ENCODE measurements at regions of chr17 and their contacts with region 1.

Region 1: DNA sequence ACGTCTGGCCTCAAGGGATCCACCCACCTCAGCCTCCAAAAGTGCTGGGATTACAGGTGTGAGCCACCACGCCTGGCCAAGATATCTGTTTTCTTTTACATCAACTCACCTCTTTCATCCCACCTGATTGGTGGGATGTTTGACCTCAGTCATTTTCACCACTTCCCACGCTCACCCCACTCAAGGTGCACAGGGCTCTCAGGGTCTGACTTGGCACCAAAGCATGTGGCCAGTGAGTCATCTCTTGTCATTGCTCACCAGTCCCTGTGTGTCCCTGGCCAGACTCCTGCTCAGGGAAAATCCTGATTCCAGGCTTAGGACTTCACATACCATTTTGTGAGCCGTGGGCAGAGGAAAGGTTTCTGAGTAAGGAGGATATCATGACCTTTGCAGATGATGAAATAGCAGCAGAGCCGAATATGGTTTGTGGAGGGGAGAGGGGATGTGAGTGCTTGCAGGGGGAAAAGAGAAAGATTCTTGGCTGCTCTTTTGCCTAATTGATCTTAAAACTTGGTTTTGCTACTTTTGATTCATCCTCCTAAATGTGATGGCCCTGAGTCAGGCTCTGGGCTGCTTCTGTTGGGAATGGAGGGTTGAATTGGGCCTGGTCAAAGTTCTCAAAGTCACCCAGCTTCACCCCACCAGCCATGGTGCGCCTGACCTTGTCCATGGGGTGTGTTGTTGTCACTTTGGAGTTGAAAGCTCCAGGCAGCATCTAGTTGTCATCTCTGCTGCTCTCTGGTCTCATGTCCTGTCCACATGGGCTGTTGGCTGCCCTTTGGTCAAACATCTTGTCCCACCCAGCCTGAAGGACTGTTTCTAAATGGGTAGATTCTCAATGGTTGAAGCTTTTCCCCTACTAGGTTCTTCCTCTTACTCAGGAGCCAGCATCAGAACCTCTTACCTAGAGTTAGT is 6.0 kb upstream of the KCNH6 start:
- DNase-seq: peak; percentile 40 to 55
- ATAC-seq: 0 out of 6 replicates have a peak, but pooled peaks of 1 of the 2 experiments have one; percentile 27
- H3K4me3 ChIP-seq: no peak overlapping the region
- H3K27ac ChIP-seq: no peak overlapping the region
- H3K4me1 ChIP-seq: peaks cover 11% of the 10 kb centered on the region
- CTCF ChIP-seq: no peak
- EP300 ChIP-seq: no peak
- POLR2A ChIP-seq: no peak
- RAD21 ChIP-seq: no peak

Region 2: DNA sequence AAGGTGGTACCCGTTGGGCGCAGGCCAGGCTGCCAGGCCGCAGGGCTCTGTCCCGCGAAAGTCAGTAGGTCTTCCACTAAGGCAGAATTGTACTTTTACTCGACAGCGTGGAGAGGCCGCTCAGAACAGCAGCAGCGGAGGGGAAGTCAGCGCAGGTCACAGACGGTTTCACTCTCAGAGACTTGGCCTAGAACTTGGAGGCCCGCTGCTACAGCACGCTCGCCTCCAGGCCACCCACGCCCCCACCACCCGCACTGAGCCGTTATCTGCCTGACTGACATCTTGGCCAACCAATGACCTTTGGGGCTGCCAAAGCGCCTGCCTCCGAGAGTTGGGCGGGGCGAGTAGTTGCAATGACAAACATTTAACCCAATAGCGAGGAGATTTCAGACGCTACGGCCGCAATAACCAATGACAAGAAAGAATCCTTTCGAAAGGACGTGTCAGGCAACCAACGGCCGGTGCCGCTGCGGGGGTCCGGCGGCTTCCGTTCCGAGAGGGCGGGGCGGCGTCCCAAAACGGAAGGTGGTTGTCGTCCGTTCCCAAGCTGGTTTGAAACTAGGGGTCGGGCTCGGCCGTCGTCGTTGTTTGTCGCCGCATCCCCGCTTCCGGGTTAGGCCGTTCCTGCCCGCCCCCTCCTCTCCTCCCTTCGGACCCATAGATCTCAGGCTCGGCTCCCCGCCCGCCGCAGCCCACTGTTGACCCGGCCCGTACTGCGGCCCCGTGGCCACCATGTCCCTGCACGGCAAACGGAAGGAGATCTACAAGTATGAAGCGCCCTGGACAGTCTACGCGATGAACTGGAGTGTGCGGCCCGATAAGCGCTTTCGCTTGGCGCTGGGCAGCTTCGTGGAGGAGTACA is 33.0 kb after region 1 on chr17 and contains the start of gene DCAF7:
- CTCF ChIA-PET with region 1: interaction called, 3 read pairs
- POLR2A ChIA-PET with region 1: interaction called, 17 read pairs
- DNase-seq: peak; percentile 100
- ATAC-seq: peak; percentile 93 to 96
- H3K4me3 ChIP-seq: peak within 1 kb of the TSS; percentile 99
- H3K27ac ChIP-seq: peak within 1 kb of the TSS; percentile 97
- H3K4me1 ChIP-seq: peaks cover 18% of the 10 kb centered on the region
- CTCF ChIP-seq: no peak
- EP300 ChIP-seq: no peak
- POLR2A ChIP-seq: peak; percentile 93
- RAD21 ChIP-seq: no peak
- polyA plus RNA-seq, gene DCAF7: 48.7 and 51.4 TPM in 2 replicates

Region 3: GRCh38 chr17:63600569-63601438 is 83.6 kb after region 1 on chr17 and contains the start of gene TACO1:
- CTCF ChIA-PET with region 1: no interaction called
- POLR2A ChIA-PET with region 1: no interaction called
- DNase-seq: peak; percentile 90 to 91
- ATAC-seq: peak; percentile 94 to 95
- H3K4me3 ChIP-seq: peak within 1 kb of the TSS; percentile 88
- H3K27ac ChIP-seq: peak within 1 kb of the TSS; percentile 90 to 95
- H3K4me1 ChIP-seq: peaks cover 13% of the 10 kb centered on the region
- CTCF ChIP-seq: no peak
- EP300 ChIP-seq: no peak
- POLR2A ChIP-seq: peak; percentile 75
- RAD21 ChIP-seq: 0 out of 5 replicates have a peak, but pooled peaks of 1 of the 2 experiments have one; percentile 17
- polyA plus RNA-seq, gene TACO1: 38.0 and 49.9 TPM in 2 replicates

Measured in A549 (cell line).